Activated T-helper 2 cell treated with anti-CD3 and anti-CD28 coated beads, Interferon-gamma antibody, Interleukin-2, Interleukin-4, amounts not matched to agents 10 μg/mL and 5 μg/mL and 100 μg/mL, durations not matched to agents 14 hours and 24 hours and 36 hours (primary cell): ENCODE measurements at regions of chr2 and their contacts with region 1.

Region 1: DNA sequence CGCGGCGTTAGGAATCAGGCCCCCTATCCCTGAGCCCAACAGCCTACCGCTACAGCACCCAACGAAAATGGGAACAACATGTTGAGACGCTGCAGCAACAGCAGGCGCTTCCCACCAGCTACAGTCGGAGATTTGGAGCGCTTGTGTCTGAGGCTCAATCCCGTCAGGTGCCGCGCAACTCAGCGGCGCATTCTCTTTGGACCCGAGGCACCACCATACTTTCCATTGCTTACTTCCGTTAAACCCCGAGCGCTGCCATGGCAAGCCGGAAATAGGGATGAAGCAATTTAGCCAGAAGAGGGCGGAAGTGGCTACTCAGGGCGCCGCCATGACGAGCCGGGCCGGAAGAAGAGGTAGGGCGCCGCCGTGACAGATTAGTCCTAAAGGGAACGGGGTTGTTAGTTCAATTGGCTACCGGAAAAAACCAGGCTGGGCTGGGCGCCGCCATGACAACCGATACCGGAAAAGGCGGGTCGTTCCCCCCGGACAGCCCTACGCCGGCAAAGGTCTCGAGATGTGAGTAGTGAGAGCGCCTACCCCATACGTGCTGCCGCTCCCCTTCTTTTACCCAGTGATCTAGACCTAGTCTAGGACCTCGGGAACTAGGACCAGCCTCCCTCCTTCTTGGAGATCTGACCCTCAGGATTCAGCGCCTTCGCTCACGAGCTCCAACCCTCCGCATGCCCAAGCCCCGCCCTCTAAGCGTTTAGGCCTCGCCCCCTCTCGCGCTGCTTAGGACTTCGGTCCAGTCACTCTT is at the start of gene CHCHD5:
- DNase-seq: peak; percentile 96
- H3K4me3 Mint-ChIP-seq: peak within 1 kb of the TSS; percentile 97
- H3K27ac Mint-ChIP-seq: peak within 1 kb of the TSS; percentile 98
- H3K4me1 Mint-ChIP-seq: peaks cover 26% of the 10 kb centered on the region
- H3K27me3 Mint-ChIP-seq: no peaks in the 10 kb centered on the region
- total RNA-seq, gene CHCHD5: 36.7 and 39.6 TPM in 2 replicates

Region 2: GRCh38 chr2:112054847-112055729 is 529.2 kb before region 1 on chr2 and contains the start of gene TMEM87B:
- intact Hi-C with region 1: loop called (anchors 1 kb)
- DNase-seq: peak; percentile 97
- H3K4me3 Mint-ChIP-seq: peak within 1 kb of the TSS; percentile 98
- H3K27ac Mint-ChIP-seq: peak within 1 kb of the TSS; percentile 97
- H3K4me1 Mint-ChIP-seq: peaks cover 32% of the 10 kb centered on the region
- H3K27me3 Mint-ChIP-seq: peaks cover 3% of the 10 kb centered on the region
- total RNA-seq, gene TMEM87B: 15.8 and 16.5 TPM in 2 replicates

Region 3: DNA sequence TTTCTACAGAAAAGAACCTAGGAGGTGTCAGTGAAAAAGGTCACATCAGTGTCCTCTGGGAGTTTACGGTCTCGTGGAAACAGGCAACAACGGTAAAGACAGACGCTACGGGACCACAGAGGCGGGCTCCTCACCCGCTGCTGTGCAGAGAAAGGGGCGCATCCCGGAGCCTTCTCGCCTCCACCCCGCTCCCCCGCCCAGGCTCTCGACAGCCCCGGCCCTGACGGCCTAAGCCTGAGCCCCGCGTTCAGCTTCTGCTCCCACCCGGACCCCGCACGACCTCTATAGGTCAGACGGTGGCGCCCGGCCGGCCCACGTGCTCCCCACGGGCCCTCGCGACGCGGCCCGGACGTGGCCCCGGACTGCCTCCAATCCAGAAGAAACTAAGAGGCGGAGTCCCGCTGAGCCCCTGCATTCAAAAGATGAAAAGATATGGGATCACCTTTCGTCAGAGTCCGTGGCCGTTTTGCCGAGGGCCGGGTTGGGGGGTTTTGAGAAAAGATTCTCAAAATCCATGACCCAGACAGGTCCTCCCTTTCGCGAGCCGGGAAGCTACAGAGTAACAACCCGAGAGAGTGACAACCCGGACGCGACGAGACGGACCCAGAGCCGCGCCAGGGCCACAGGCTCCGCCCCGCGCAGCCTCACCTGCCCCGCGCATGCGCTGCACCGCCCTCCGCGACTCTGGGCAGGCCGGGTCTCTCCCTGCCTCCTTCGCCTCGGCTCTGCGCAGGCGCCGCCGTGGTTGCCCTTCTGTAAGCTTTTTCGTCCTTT is 329.7 kb before region 1 on chr2 and contains the start of gene ZC3H8:
- intact Hi-C with region 1: loop called (anchors 5 kb)
- DNase-seq: peak; percentile 95
- H3K4me3 Mint-ChIP-seq: peak within 1 kb of the TSS; percentile 31
- H3K27ac Mint-ChIP-seq: peak within 1 kb of the TSS; percentile 91
- H3K4me1 Mint-ChIP-seq: peaks cover 24% of the 10 kb centered on the region
- H3K27me3 Mint-ChIP-seq: no peaks in the 10 kb centered on the region
- total RNA-seq, gene ZC3H8: 31.8 and 33.4 TPM in 2 replicates

Region 4: GRCh38 chr2:112481050-112481527 is 103.2 kb before region 1 on chr2:
- intact Hi-C with region 1: loop called (anchors 1 kb)
- DNase-seq: peak; percentile 81
- H3K4me3 Mint-ChIP-seq: peak overlapping the region; percentile 92
- H3K27ac Mint-ChIP-seq: peak overlapping the region; percentile 94
- H3K4me1 Mint-ChIP-seq: peaks cover 22% of the 10 kb centered on the region
- H3K27me3 Mint-ChIP-seq: no peaks in the 10 kb centered on the region

Region 5: DNA sequence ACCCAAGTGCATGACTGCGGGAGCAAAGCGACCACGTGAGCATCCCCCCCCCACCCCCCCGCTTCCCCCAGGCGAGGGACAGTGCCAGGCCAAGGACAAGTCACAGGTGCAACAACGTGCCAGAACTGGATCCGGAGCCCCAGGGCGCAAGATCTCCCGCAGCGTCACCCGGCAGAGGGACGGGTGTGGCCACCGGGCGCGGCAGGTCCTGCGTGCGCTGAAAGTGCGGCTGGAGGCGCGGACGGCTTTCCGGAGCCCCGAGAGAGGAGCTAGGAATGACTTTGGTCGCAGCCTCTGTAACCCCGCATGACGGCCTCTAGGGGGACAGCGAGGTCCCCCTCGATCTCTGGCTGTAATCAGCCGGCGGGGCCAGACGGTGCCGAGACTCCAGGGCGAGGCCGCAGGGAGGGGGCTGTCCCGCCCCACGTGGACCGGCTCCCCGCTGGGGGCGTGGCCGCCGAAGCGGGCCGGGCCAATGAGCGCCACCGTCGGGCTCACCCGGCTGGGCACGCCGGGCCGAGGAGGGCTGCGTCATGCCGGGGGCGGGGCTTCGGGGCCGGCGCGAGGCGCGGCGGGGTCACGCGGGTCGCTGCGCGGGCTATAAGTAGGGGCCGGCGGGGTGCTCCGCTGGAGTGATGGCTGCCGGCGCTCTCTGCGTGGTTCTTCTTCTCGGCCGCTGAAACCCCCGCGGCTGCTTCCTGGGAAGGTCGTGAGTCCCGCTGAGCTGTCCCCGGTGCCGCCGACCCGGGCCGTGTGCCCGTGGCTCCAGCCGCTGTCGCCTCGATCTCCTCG is 61.2 kb after region 1 on chr2 and contains the start of gene SLC20A1:
- intact Hi-C with region 1: loop called (anchors 2 kb)
- DNase-seq: peak; percentile 98
- H3K4me3 Mint-ChIP-seq: peak within 1 kb of the TSS; percentile 97
- H3K27ac Mint-ChIP-seq: peak within 1 kb of the TSS; percentile 77
- H3K4me1 Mint-ChIP-seq: peaks cover 68% of the 10 kb centered on the region
- H3K27me3 Mint-ChIP-seq: no peaks in the 10 kb centered on the region
- total RNA-seq, gene SLC20A1: 128 TPM in 2 replicates

Region 6: DNA sequence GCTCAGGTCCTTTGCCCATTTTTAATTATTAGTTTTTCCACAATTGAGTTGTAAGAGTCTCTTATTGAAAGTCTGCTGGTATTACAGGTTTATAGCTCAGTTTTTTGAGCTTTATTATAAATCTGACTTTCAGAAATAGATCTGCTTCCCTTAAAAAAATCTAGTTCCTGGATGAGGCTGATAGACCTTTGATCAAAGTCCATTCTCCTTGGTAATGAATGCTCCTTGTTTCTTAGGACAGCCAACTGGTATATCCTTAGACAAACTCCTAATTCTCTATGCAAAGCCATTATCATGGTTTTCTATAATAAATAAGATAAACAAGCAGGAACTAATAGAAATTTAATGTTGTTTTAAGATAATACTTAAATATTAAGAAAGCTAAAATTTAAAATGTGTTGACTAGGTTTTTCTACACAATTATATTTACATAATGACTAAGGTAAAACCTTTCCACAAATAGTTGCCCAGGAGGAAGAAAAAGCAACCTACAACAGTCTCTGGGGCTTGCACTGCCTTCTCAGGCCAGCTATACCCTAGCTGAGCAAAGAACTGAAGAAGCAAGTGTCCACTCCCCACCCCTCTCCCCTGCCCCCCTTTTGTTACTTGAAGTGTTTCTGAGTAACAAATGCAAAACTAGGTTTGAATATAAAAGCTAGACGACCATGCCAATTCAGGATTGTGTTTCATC is 153.4 kb after region 1 on chr2:
- intact Hi-C with region 1: no loop called
- DNase-seq: no peak
- H3K4me3 Mint-ChIP-seq: no peak overlapping the region
- H3K27ac Mint-ChIP-seq: no peak overlapping the region
- H3K4me1 Mint-ChIP-seq: peaks cover 9% of the 10 kb centered on the region
- H3K27me3 Mint-ChIP-seq: no peaks in the 10 kb centered on the region